Panc1 (cell line): ENCODE measurements at regions of chr18 and their contacts with region 1.

Region 1: GRCh38 chr18:78830161-78830560 is 149.5 kb upstream of the SALL3 start:
- DNase-seq: no peak
- ATAC-seq: no peak
- H3K4me3 ChIP-seq: no peak overlapping the region
- H3K27ac ChIP-seq: no peak overlapping the region
- H3K4me1 ChIP-seq: no peaks in the 10 kb centered on the region; the same call in 1 of the 2 replicates
- H3K27me3 ChIP-seq: peaks cover 28% of the 10 kb centered on the region
- CTCF ChIP-seq: no peak

Region 2: GRCh38 chr18:77067291-77068061 is 1762.7 kb before region 1 on chr18:
- CTCF ChIA-PET with region 1: no interaction called
- POLR2A ChIA-PET with region 1: interaction called, 12 read pairs
- in situ Hi-C with region 1: no loop called
- intact Hi-C with region 1: no loop called
- DNase-seq: peak; percentile 90
- ATAC-seq: peak; percentile 83
- H3K4me3 ChIP-seq: peak overlapping the region in 1 of 2 experiments; percentile 5; a peak in 2 of 4 replicates
- H3K27ac ChIP-seq: peak overlapping the region; percentile 81
- H3K4me1 ChIP-seq: peaks cover 93% of the 10 kb centered on the region
- H3K27me3 ChIP-seq: no peaks in the 10 kb centered on the region
- CTCF ChIP-seq: no peak

Region 3: DNA sequence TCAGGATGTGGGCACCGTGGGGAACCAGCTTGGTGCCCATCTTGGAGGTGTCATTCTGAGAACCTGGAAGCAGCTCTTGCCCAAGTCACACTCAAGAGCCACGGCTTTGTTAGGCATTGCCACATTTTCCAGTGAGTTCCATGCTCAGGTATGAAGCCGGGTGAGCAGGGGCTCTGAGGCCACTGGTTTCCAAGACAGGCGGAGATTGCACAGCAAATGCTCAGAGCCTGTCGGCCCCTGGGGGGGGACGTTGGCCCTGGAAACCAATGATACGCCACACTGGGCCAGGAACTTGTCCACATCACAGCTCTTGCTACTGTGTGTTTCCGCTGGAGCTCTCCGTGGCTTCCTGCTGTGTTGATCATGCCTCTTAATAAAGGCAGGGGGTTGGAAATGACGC is 97.0 kb after region 1 on chr18:
- CTCF ChIA-PET with region 1: no interaction called
- POLR2A ChIA-PET with region 1: no interaction called
- in situ Hi-C with region 1: no loop called
- intact Hi-C with region 1: no loop called
- DNase-seq: no peak
- ATAC-seq: no peak
- H3K4me3 ChIP-seq: no peak overlapping the region
- H3K27ac ChIP-seq: no peak overlapping the region
- H3K4me1 ChIP-seq: no peaks in the 10 kb centered on the region
- H3K27me3 ChIP-seq: peaks cover 24% of the 10 kb centered on the region
- CTCF ChIP-seq: no peak